Activated CD4-positive, alpha-beta T cell treated with anti-CD3 and anti-CD28 coated beads, Interleukin-2, amount 10 ng/mL, durations not matched to agents 24 days and 14 days (primary cell): ENCODE measurements at regions of chr12 and their contacts with region 1.

Region 1: DNA sequence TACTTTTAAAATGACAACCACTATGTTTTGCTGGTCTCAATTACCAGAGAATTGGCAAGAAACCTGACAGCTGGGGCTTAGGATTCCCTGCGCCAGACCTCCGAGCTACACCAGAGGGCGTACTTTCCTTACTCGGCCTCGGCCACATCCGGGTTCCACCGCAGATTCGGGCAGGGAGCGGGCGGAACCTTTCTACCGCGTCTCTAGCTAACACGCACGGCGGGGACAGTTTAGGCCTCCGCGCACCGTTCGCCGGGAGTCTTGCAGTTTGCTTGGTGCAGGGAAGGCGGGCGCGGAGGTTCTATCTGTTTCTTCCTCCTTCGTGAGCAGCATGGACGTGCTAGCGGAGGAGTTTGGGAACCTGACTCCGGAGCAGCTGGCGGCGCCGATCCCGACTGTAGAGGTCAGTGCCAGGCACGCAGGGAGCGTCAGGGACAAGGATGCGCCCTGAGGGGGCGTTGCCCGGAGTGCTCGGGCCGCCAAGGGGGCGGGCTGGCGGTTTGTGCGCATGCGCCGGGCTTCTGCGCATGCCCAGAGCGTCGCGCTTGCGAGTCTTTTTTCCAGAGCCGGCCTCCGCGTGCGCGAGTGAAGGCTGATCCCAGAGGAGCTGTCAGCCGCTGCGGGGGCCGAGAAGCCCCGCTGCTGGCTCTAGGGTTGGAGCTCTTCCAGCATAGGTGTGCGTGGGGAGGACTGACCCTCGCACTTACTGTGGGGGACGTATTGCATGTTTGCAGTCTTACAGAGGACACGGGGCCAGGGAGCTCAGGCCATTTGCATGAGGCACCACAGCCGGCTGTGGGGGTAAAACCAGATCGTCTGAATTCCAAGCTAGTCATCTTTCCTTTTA is at the start of gene POLR3B:
- DNase-seq: peak; percentile 98
- H3K4me3 Mint-ChIP-seq: peak within 1 kb of the TSS; percentile 92
- H3K27ac Mint-ChIP-seq: peak within 1 kb of the TSS; percentile 96
- H3K4me1 Mint-ChIP-seq: peaks cover 17% of the 10 kb centered on the region
- H3K27me3 Mint-ChIP-seq: no peaks in the 10 kb centered on the region
- total RNA-seq, gene POLR3B: 12.1 and 13.1 TPM in 2 replicates

Region 2: GRCh38 chr12:106223485-106224354 is 134.1 kb before region 1 on chr12:
- intact Hi-C with region 1: loop called (anchors 5 kb)
- DNase-seq: peak; percentile 93
- H3K4me3 Mint-ChIP-seq: no peak overlapping the region
- H3K27ac Mint-ChIP-seq: no peak overlapping the region
- H3K4me1 Mint-ChIP-seq: peaks cover 20% of the 10 kb centered on the region
- H3K27me3 Mint-ChIP-seq: peaks cover 11% of the 10 kb centered on the region

Region 3: DNA sequence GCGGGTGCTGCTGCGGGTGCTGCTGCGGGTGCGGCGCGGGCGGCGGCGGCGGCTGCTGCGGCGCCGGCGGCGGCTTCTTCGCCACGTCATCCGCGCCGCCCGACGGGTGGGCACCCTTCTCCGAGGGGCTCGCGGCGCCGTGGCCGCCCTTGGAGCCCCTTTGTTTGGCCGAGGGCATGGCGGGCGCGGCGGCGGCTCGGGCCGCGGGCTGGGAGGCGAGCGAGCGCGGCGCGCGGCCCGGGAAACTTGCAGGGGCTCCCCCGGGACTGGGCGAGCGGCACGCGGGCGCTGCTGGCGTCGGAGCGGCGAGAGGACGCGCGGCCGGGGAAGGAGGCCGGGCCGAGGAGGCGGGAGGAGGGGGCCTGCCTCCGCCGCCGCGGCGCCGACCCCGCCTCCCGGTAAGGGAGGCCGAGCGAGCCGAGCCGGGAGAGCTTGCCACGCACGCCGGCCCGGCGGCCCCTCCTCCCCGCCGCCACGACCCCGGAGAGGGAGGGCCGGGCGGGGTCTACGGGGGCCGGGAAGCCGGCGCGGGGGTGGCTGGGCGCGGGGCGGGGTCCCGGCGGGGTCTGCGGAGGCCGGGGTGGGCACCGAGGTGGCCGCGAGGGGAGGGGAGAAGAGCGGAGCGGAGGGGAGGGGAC is 110.0 kb before region 1 on chr12 and contains the start of gene CKAP4:
- intact Hi-C with region 1: loop called (anchors 5 kb)
- DNase-seq: peak; percentile 85
- H3K4me3 Mint-ChIP-seq: peak within 1 kb of the TSS; percentile 78
- H3K27ac Mint-ChIP-seq: peak within 1 kb of the TSS; percentile 62
- H3K4me1 Mint-ChIP-seq: peaks cover 9% of the 10 kb centered on the region
- H3K27me3 Mint-ChIP-seq: peaks cover 12% of the 10 kb centered on the region
- total RNA-seq, gene CKAP4: 6.7 and 7.7 TPM in 2 replicates

Region 4: GRCh38 chr12:106302401-106303201 is 55.2 kb before region 1 on chr12 and contains the start of gene TCP11L2:
- intact Hi-C with region 1: loop called (anchors 1 kb)
- DNase-seq: peak; percentile 97
- H3K4me3 Mint-ChIP-seq: peak within 1 kb of the TSS; percentile 97
- H3K27ac Mint-ChIP-seq: peak within 1 kb of the TSS; percentile 100
- H3K4me1 Mint-ChIP-seq: peaks cover 38% of the 10 kb centered on the region
- H3K27me3 Mint-ChIP-seq: no peaks in the 10 kb centered on the region
- total RNA-seq, gene TCP11L2: 3.2 and 4.5 TPM in 2 replicates

Region 5: DNA sequence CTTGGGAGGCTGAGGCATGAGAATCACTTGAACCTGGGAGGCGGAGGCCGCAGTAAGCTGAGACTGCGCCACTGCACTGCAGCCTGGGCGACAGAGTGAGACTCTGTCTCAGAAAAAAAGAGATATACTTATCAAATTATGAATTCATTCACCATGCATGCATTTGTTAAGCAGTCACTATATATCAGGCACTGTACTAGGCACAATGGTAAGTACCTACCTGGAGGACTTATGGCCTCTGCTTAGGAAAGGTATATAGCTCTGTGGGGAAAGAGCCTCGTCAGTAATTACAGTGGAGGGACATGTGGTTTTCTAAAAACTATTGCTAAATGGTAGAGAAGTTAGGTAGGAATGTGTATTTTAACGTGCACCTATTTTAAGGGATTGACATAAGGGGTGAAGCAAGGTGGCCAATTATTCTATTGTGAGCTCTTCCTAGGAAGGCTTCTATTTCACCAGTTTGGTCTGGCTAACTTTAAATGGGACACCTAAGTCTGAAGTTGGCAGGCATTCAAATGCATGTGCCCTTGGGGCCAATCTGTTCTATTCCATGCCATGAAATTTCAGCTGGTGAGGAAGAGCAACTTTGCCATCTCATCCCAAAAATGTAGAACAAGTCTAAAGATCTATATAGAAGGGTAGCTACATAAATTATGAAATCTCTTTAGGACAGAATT is 40.2 kb before region 1 on chr12:
- intact Hi-C with region 1: no loop called
- DNase-seq: no peak
- H3K4me3 Mint-ChIP-seq: no peak overlapping the region
- H3K27ac Mint-ChIP-seq: no peak overlapping the region
- H3K4me1 Mint-ChIP-seq: peaks cover 1% of the 10 kb centered on the region
- H3K27me3 Mint-ChIP-seq: no peaks in the 10 kb centered on the region

Region 6: GRCh38 chr12:106527356-106527755 is 169.6 kb after region 1 on chr12:
- intact Hi-C with region 1: no loop called
- DNase-seq: no peak
- H3K4me3 Mint-ChIP-seq: no peak overlapping the region
- H3K27ac Mint-ChIP-seq: no peak overlapping the region
- H3K4me1 Mint-ChIP-seq: no peaks in the 10 kb centered on the region
- H3K27me3 Mint-ChIP-seq: peaks cover 7% of the 10 kb centered on the region

Region 7: DNA sequence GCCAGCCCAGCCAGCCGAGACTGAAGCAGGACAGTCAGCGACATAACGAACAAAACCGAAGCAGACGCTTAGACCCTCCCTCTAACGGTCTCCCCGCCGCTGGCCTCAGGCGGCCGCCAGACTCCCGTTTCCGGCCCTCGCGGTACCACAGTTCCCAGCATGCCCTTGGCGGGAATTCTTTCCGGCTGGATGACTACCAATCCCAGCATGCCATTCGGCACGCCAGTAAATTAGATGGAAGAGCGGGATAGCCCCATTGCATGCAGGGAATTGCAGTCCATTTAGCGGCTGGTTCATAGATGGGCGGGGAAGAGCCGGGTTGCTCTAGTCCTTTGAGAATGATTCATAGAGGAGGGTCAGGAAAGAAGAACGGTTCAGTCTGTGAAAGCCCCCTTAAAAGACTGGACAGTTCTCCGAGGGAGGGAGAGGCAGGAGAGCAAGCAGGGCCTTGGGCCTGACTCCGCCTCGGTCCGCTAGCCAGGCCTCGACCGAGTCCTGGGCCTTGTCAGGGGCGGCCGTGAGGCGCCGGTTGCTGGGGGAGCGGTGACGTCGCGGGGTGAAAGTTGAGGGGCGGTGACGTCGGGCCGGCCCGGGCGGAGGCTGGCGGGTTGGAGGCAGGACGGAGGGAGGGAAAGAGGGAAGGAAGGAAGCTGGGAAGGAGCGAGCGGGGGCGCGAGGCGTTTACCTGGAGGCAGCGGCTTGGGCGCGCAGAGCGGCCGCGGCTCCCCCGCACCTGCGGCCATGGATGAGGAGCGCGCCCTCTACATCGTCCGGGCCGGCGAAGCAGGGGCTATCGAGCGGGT is 416.4 kb after region 1 on chr12 and contains the start of gene RIC8B:
- intact Hi-C with region 1: loop called (anchors 2 kb)
- DNase-seq: peak; percentile 95
- H3K4me3 Mint-ChIP-seq: peak within 1 kb of the TSS; percentile 98
- H3K27ac Mint-ChIP-seq: peak within 1 kb of the TSS; percentile 96
- H3K4me1 Mint-ChIP-seq: peaks cover 32% of the 10 kb centered on the region
- H3K27me3 Mint-ChIP-seq: peaks cover 2% of the 10 kb centered on the region
- total RNA-seq, gene RIC8B: 13.6 and 14.9 TPM in 2 replicates

Region 8: DNA sequence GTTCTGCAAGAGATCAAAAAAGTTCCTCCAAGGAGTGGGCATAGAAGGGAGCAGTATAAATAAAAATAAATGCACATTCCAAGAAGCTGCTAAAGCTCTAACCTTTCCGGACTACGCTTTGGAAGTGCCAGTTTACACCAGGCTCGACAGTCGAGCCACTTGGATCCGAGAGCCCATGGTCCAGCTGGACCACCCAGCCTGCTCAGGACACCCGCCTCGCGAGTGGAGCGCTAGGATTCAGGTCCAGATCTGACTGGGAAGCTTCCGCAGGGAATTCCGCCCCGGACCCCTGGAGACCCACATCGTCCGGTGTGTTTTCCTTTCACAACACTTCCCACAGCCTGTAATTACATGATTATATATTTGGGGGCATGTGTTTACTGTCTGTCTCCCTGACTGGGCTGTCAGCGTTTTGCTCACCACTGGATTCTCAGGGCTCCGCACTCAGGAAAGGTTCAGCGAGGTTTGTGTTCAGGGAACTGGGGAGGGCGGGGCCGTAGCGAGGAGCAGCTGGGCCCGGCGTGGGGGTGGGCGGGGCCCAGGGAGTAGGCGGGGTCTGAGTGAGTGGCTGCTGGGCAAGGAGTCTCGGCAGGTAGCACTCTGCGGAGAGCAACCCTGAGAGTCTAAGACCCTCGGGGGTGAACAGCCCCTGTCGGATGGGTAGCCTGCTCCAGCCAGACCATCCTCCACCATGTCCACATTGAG is 545.6 kb after region 1 on chr12:
- intact Hi-C with region 1: loop called (anchors 1 kb)
- DNase-seq: peak; percentile 94
- H3K4me3 Mint-ChIP-seq: peak overlapping the region; percentile 61
- H3K27ac Mint-ChIP-seq: no peak overlapping the region
- H3K4me1 Mint-ChIP-seq: peaks cover 9% of the 10 kb centered on the region
- H3K27me3 Mint-ChIP-seq: peaks cover 50% of the 10 kb centered on the region

Region 9: GRCh38 chr12:106955377-106956047 is 597.7 kb after region 1 on chr12 and contains the start of gene TMEM263:
- intact Hi-C with region 1: loop called (anchors 1 kb)
- DNase-seq: peak; percentile 97
- H3K4me3 Mint-ChIP-seq: peak within 1 kb of the TSS; percentile 97
- H3K27ac Mint-ChIP-seq: peak within 1 kb of the TSS; percentile 97
- H3K4me1 Mint-ChIP-seq: peaks cover 24% of the 10 kb centered on the region
- H3K27me3 Mint-ChIP-seq: peaks cover 13% of the 10 kb centered on the region
- total RNA-seq, gene TMEM263: 24.8 and 26.6 TPM in 2 replicates